IMR-90 (cell line): ENCODE measurements at regions of chr16 and their contacts with region 1.

Region 1: DNA sequence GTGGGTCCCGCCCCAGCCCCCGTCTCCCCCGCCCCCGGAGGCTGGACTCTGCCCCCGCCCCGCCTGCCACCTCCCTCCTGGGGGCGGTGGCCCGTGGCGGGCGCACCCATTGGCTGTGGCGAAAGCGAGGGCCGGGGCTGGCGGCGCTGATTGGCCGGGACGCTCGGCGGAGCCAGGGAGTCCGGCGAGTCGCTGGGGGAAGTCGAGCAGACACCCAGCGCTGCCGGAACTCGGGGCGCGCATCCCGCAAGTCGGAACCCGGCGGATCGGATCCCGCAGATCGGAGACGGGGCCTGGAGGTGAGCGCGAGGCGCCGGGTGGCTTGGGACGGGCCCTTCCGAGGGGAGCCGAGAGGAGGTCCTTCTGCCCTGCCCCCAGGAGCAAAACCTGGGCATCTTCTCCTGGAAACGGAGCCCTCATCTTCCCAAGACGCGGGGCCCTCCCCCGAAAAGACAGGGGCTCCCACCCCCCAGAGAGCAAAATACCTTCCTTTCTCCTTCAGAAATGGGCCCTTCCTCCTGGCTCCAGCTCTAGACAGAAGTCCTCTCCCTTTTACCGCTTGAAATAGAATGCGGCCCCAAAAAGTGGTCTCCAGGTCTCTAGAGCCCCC is at the start of gene ABAT:
- DNase-seq: peak; percentile 69
- ATAC-seq: peak; percentile 99
- H3K4me3 ChIP-seq: peak within 1 kb of the TSS; percentile 90
- H3K27ac ChIP-seq: no peak within 1 kb of the TSS
- H3K4me1 ChIP-seq: peaks cover 5% of the 10 kb centered on the region
- H3K27me3 ChIP-seq: no peaks in the 10 kb centered on the region; the same call in 1 of the 2 replicates
- CTCF ChIP-seq: no peak
- POLR2A ChIP-seq: no peak
- RAD21 ChIP-seq: no peak
- total RNA-seq, gene ABAT: 4.4 and 4.5 TPM in 2 replicates

Region 2: GRCh38 chr16:8751481-8752311 is 77.2 kb after region 1 on chr16:
- CTCF ChIA-PET with region 1: no interaction called
- POLR2A ChIA-PET with region 1: no interaction called
- dilution Hi-C with region 1: no loop called
- in situ Hi-C with region 1: no loop called
- intact Hi-C with region 1: loop called (anchors 1 kb)
- DNase-seq: peak; percentile 78
- ATAC-seq: peak; percentile 88
- H3K4me3 ChIP-seq: no peak overlapping the region
- H3K27ac ChIP-seq: no peak overlapping the region
- H3K4me1 ChIP-seq: peaks cover 9% of the 10 kb centered on the region
- H3K27me3 ChIP-seq: no peaks in the 10 kb centered on the region
- CTCF ChIP-seq: no peak
- POLR2A ChIP-seq: no peak
- RAD21 ChIP-seq: no peak

Region 3: GRCh38 chr16:9008601-9009260 is 334.2 kb after region 1 on chr16:
- CTCF ChIA-PET with region 1: no interaction called
- POLR2A ChIA-PET with region 1: no interaction called
- dilution Hi-C with region 1: no loop called
- in situ Hi-C with region 1: loop called (anchors 25 kb)
- intact Hi-C with region 1: no loop called
- DNase-seq: peak; percentile 56
- ATAC-seq: peak; percentile 97
- H3K4me3 ChIP-seq: no peak overlapping the region
- H3K27ac ChIP-seq: no peak overlapping the region
- H3K4me1 ChIP-seq: peaks cover 2% of the 10 kb centered on the region; the same call in 1 of the 2 replicates
- H3K27me3 ChIP-seq: no peaks in the 10 kb centered on the region
- CTCF ChIP-seq: peak; percentile 76
- POLR2A ChIP-seq: peak; percentile 30; the same call in 1 of the 2 replicates
- RAD21 ChIP-seq: peak; percentile 81

Region 4: DNA sequence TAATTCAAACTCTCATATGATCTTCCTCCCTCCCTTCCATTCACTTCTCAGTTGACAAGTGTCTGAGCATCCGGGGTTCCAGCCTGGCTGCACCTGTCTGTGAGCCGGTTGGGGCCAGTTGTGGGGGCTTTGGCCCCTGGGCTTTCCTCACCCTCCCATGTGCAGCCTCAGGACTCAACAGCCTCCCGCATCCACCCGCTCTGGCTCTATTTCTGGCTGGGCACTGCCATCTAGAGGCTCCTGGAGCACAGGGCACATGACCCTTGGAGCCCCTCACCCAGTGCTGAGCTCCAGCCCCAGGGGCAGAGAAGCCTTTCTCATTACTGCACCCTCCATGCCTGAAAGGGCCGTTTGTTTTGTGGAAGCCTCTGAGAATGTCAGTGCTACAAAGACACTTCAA is 460.2 kb after region 1 on chr16:
- CTCF ChIA-PET with region 1: no interaction called
- POLR2A ChIA-PET with region 1: no interaction called
- dilution Hi-C with region 1: no loop called
- in situ Hi-C with region 1: loop called (anchors 25 kb)
- intact Hi-C with region 1: no loop called
- DNase-seq: peak; percentile 55
- ATAC-seq: peak; percentile 64
- H3K4me3 ChIP-seq: no peak overlapping the region
- H3K27ac ChIP-seq: no peak overlapping the region
- H3K4me1 ChIP-seq: no peaks in the 10 kb centered on the region
- H3K27me3 ChIP-seq: no peaks in the 10 kb centered on the region
- CTCF ChIP-seq: peak; percentile 61
- POLR2A ChIP-seq: no peak
- RAD21 ChIP-seq: peak; percentile 73